WTC11 (cell line): ENCODE measurements at regions of chr14 and their contacts with region 1.

Region 1: DNA sequence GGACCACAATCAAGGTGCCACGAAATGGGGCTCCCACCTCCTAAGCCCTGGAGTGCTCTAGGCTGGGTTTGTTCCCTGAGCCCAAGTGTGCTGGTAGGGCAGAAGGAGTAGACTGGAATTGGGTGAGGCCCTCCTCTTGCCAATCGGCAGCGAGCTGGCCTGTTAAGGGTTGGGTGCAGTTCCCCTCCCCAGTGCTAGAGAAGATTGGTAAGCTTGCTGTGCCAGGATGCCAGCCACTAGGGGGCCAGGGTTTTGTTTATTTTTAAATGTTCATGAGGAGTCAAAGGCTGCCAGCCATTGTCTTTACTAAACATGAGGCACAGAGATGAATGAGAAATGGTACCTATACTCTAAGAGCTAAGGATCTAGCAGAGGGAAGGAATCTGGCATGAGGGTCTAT is 79.7 kb downstream of the SPTB start:
- DNase-seq: peak; percentile 38
- ATAC-seq: peak; percentile 49
- H3K4me3 Mint-ChIP-seq: no peak overlapping the region
- H3K27ac Mint-ChIP-seq: no peak overlapping the region
- H3K4me1 Mint-ChIP-seq: peaks cover 3% of the 10 kb centered on the region; the same call in 1 of the 2 replicates
- H3K27me3 Mint-ChIP-seq: no peaks in the 10 kb centered on the region; the same call in 1 of the 2 replicates
- CTCF ChIP-seq: 0 out of 2 replicates have a peak, but pooled peaks have one; percentile 26

Region 2: DNA sequence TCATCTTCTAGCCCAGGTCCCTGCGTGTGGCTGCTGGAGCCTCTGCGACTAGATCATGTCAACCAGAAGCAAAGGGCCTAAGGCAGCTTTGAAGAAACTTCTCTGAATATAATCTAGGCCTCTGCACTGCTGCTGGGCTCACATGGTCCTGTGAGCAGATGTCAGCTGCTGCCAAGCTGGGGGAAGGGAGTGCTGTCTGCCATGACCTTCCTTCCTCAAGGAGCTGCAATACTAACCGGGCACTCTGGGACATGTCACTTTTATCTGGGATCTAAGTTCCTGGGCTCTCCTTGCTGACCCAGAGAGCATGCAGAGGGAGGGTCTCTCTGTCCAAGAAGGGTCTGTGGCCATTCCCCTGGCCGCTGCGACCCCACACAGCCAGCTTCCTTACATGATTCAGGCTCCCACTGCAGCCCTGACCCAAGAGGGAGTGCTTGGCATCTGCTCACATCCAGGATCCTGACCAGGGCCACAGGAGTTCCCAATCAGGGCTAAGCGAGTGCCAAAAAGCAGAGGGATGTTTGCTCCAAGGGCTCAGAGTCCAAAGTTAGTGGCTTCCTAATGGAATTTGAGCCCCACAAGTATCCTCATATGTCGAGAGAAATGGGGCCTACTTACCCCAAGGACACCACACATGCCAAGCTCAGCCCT is 21.8 kb before region 1 on chr14:
- CTCF ChIA-PET with region 1: interaction called, 75 read pairs
- POLR2A ChIA-PET with region 1: no interaction called
- DNase-seq: no peak
- ATAC-seq: no peak
- H3K4me3 Mint-ChIP-seq: no peak overlapping the region
- H3K27ac Mint-ChIP-seq: no peak overlapping the region
- H3K4me1 Mint-ChIP-seq: peaks cover 5% of the 10 kb centered on the region
- H3K27me3 Mint-ChIP-seq: peaks cover 1% of the 10 kb centered on the region; the same call in 1 of the 2 replicates
- CTCF ChIP-seq: no peak

Region 3: DNA sequence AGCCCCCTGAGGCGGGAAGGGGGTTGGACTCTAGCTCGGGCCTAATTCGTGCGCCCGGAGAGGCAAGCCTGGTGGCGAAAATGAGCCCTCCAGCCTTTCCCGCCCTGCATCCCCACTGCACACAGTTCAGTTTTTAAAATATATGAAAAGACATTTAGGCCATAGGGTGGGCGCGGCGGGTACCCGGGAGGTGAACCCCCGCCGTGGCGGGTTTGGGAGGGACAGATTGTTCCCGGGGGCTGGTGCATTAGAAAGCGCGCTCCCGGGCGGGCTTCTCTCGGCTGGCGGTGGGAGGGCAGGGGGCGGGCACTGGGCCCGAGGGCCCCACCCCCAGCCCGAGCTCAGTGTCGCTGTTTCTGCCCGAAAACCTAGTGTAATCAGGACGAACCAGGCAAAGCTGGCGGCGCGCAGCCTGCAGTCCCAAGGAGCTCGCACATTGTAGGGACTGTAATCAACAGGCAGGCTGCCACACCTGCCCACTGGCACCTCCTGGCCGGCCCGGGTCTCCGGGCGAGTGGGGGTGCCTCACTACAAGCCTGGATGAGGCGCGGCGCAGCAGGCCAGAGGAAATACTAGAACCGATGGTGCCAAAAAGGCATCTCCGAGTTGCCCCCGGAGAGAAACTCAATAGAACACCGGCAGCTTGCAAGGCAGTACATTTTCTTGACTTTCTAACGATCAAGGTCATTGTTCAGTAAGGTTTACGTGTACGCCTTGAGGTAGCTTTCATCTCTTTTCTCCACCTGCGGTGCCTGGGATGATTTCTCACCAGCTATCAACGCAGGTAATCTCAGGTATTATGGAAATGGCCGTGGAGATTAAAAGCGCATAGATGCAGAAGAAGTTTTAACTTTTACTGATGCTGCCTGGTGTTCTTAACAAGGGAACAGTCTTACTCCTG is 80.5 kb after region 1 on chr14:
- CTCF ChIA-PET with region 1: interaction called, 27 read pairs
- POLR2A ChIA-PET with region 1: no interaction called
- DNase-seq: peak; percentile 77
- ATAC-seq: peak; percentile 85
- H3K4me3 Mint-ChIP-seq: peak overlapping the region; percentile 88
- H3K27ac Mint-ChIP-seq: peak overlapping the region; percentile 41; the same call in 1 of the 2 replicates
- H3K4me1 Mint-ChIP-seq: peaks cover 18% of the 10 kb centered on the region
- H3K27me3 Mint-ChIP-seq: peaks cover 70% of the 10 kb centered on the region
- CTCF ChIP-seq: no peak

Region 4: GRCh38 chr14:65012353-65012887 is 212.4 kb after region 1 on chr14:
- CTCF ChIA-PET with region 1: no interaction called
- POLR2A ChIA-PET with region 1: no interaction called
- DNase-seq: no peak
- ATAC-seq: no peak
- H3K4me3 Mint-ChIP-seq: no peak overlapping the region
- H3K27ac Mint-ChIP-seq: no peak overlapping the region
- H3K4me1 Mint-ChIP-seq: 0 out of 2 replicates have a peak, but pooled peaks cover 4% of the 10 kb centered on the region
- H3K27me3 Mint-ChIP-seq: no peaks in the 10 kb centered on the region
- CTCF ChIP-seq: no peak